ENCODE measurements at regions of chr19 and their contacts with region 1.

Region 1: GRCh38 chr19:55058781-55059539 is 4.0 kb downstream of the RDH13 start:
- DNase-seq: no peak
- ATAC-seq: no peak
- H3K4me3 ChIP-seq: no peak overlapping the region
- H3K27ac ChIP-seq: no peak overlapping the region
- H3K4me1 ChIP-seq: no peaks in the 10 kb centered on the region
- H3K27me3 ChIP-seq: no peaks in the 10 kb centered on the region
- CTCF ChIP-seq: no peak

Region 2: DNA sequence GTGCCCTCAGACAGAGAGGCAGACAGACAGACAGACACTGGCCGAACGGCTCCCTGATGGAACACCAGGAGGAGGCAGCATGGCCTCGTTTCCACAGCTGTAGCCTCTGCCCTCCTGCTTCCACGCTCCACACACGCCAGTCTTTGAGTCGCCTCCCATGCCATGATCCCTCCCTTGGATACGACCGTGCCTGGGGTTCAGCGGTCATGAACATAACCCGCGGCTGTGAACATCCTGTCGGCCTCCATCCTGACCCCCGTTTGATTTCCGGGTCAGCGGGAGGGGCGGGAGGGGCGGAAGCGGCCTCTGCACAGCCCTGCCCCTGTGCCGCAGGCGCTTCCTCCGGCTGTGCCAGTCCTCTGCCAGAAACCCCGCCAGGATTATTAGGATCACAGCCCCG is 44.2 kb before region 1 on chr19:
- CTCF ChIA-PET with region 1: no interaction called
- POLR2A ChIA-PET with region 1: no interaction called
- in situ Hi-C with region 1: no loop called
- intact Hi-C with region 1: no loop called
- DNase-seq: no peak
- ATAC-seq: peak; percentile 73
- H3K4me3 ChIP-seq: peak overlapping the region; percentile 14 to 31; a peak in 3 of 4 replicates
- H3K27ac ChIP-seq: no peak overlapping the region
- H3K4me1 ChIP-seq: 0 out of 2 replicates have a peak, but pooled peaks cover 3% of the 10 kb centered on the region
- H3K27me3 ChIP-seq: no peaks in the 10 kb centered on the region
- CTCF ChIP-seq: no peak

Region 3: DNA sequence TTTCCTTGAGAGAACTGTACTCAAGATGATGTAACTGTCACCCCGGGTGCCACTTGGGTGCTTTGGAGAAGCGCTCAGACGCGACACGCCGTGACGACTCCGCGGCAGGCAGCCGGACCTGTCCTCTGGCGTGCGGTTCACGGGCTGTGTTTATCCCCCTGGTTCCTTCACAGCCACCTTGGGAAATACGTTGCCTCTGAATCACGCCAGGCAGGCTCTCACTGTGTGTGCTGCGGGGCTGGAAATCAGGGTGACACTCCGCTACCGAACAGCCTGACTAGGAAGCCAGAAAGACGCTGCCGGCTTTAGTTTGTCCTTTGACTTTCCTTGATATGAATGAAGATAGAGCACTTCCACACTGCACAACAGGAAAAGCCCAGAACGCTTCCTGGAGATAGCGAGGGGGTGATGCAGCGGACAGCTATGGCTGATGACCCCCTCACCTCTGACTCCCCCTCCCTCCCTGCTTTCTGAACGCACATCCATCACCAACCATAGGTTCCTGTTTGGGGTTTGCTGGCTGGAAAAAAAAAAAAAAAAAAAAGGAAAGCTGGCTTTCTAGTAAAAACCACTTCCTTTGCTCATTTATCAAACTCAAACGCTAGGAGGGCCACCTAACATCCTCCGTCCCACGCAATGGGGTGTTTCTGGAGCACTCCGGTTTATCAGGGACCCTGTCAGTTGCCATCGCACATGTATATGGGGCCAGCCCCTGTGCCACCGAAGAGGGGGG is 17.2 kb before region 1 on chr19:
- CTCF ChIA-PET with region 1: interaction called, 4 read pairs
- POLR2A ChIA-PET with region 1: interaction called, 12 read pairs
- in situ Hi-C with region 1: no loop called
- intact Hi-C with region 1: no loop called
- DNase-seq: no peak
- ATAC-seq: no peak
- H3K4me3 ChIP-seq: no peak overlapping the region
- H3K27ac ChIP-seq: no peak overlapping the region
- H3K4me1 ChIP-seq: no peaks in the 10 kb centered on the region
- H3K27me3 ChIP-seq: no peaks in the 10 kb centered on the region
- CTCF ChIP-seq: no peak

Measured in Panc1 (cell line).